B cell (primary cell): ENCODE measurements at regions of chr7 and their contacts with region 1.

Region 1: DNA sequence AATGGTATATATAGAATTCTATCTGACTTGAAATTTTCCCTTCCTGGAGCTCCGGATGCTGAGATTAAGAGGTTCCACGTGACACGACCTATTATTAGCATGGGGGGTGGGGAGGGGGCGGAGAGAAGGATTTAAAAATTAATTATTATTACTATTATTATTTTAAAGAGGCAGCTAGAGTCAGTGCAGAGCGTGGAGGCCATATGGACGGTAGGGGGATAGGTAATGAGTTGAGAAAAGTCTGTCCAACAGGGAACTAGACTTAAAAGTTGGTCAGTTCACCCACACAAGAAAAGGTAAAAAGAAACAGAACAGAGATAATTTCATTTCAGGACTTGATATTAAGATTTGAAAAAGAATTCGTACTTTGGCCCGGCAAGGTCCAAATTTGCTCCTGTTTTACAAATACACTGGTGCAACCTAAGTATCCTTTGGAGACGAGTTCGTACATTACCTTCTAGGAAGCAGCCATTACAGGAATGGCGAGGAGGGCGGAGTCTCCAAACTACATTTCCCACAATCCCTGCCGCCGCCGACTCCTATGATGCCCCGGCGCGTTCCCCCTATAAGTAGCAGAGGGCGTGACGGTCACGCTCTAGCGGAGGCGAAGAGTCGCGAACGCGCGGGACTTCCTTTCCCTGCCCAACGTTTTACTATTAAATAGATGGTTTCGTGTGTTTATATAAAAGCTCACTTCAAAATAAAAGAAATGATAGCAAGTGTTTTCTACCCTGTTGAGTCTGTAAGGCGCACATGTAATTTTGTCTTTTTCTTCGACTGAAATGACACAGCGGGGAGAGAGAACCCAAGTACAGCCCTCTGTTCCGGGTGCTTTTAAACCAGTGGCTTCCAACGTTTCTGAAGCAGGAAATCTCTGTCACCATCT is at the start of gene SMIM30:
- DNase-seq: peak; percentile 91
- ATAC-seq: peak; percentile 100
- H3K4me3 ChIP-seq: peak within 1 kb of the TSS; percentile 40 to 88 (median 69)
- H3K4me3 Mint-ChIP-seq: peak within 1 kb of the TSS; percentile 96
- H3K27ac ChIP-seq: peak within 1 kb of the TSS; percentile 62 to 87
- H3K27ac Mint-ChIP-seq: peak within 1 kb of the TSS; percentile 95
- H3K4me1 ChIP-seq: peaks cover 8 to 11% of the 10 kb centered on the region in 2 donors
- H3K4me1 Mint-ChIP-seq: peaks cover 23% of the 10 kb centered on the region
- H3K27me3 ChIP-seq: no peaks in the 10 kb centered on the region
- H3K27me3 Mint-ChIP-seq: no peaks in the 10 kb centered on the region
- CTCF ChIP-seq: no peak
- total RNA-seq, gene SMIM30: 21.0 and 24.4 TPM in 2 replicates

Region 2: GRCh38 chr7:112398534-112398933 is 719.8 kb before region 1 on chr7:
- CTCF ChIA-PET with region 1: no interaction called
- POLR2A ChIA-PET with region 1: no interaction called
- intact Hi-C with region 1: loop called (anchors 2 kb)
- DNase-seq: no peak
- ATAC-seq: no peak
- H3K4me3 ChIP-seq: no peak overlapping the region
- H3K4me3 Mint-ChIP-seq: no peak overlapping the region
- H3K27ac ChIP-seq: no peak overlapping the region
- H3K27ac Mint-ChIP-seq: no peak overlapping the region
- H3K4me1 ChIP-seq: no peaks in the 10 kb centered on the region
- H3K4me1 Mint-ChIP-seq: peaks cover 1% of the 10 kb centered on the region
- H3K27me3 ChIP-seq: peaks cover 0 to 12% (median 7%) of the 10 kb centered on the region in 4 experiments
- H3K27me3 Mint-ChIP-seq: peaks cover 37% of the 10 kb centered on the region
- CTCF ChIP-seq: no peak

Region 3: GRCh38 chr7:112523871-112524270 is 594.4 kb before region 1 on chr7:
- CTCF ChIA-PET with region 1: no interaction called
- POLR2A ChIA-PET with region 1: no interaction called
- intact Hi-C with region 1: no loop called
- DNase-seq: no peak
- ATAC-seq: no peak
- H3K4me3 ChIP-seq: no peak overlapping the region
- H3K4me3 Mint-ChIP-seq: no peak overlapping the region
- H3K27ac ChIP-seq: no peak overlapping the region
- H3K27ac Mint-ChIP-seq: no peak overlapping the region
- H3K4me1 ChIP-seq: no peaks in the 10 kb centered on the region
- H3K4me1 Mint-ChIP-seq: no peaks in the 10 kb centered on the region
- H3K27me3 ChIP-seq: peaks cover 0 to 3% (median 0%) of the 10 kb centered on the region in 4 experiments
- H3K27me3 Mint-ChIP-seq: peaks cover 17% of the 10 kb centered on the region
- CTCF ChIP-seq: no peak

Region 4: DNA sequence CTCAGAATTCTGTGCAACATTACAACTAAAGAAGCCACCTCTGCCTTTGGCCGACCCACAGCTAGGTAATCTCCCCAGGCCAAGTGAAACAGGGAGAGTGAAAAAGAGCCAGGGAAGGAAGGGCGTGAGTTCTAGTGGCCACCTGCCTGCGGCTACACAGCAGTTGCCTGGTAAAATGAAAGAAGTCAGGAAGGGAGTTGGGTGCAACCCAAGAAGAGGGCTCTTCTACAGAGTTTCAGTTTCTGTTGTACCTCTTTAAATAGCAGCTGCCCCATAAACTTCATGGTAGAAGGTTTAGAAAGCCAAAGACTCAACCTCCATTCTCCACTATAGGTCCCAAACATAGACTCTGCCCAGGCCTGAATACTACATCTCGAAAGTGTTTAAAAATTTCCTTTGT is 251.9 kb before region 1 on chr7:
- CTCF ChIA-PET with region 1: no interaction called
- POLR2A ChIA-PET with region 1: no interaction called
- intact Hi-C with region 1: no loop called
- DNase-seq: no peak
- ATAC-seq: peak; percentile 36
- H3K4me3 ChIP-seq: no peak overlapping the region
- H3K4me3 Mint-ChIP-seq: peak overlapping the region; percentile 67
- H3K27ac ChIP-seq: peak overlapping the region in 1 of 2 donors; percentile 21
- H3K27ac Mint-ChIP-seq: peak overlapping the region; percentile 32
- H3K4me1 ChIP-seq: peaks cover 5 to 9% of the 10 kb centered on the region in 2 donors
- H3K4me1 Mint-ChIP-seq: peaks cover 33% of the 10 kb centered on the region
- H3K27me3 ChIP-seq: no peaks in the 10 kb centered on the region
- H3K27me3 Mint-ChIP-seq: no peaks in the 10 kb centered on the region
- CTCF ChIP-seq: no peak

Region 5: DNA sequence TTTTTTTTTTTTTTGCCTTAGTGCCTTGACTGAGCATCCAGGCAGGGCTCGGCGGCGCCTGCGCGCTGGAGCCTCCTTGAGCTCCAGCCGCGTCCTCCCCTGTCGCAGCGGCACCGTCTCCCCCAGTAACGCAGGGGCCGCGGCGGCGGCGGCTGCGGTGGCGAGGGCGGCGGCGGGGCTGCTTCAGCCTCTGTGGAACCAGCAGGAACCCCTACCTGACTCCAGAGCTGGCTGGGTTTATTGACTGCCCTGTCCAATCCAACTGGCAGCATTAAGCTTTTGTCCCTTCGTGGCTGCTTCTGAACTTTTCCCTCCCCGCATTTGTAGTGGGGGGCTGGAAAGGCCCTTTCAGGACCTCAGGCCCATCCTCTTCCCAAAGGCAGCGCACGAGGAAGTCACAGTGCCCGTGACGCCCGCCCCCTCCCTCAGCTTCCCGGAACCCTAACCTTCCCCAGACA is 31.9 kb before region 1 on chr7 and contains the start of gene GPR85:
- CTCF ChIA-PET with region 1: no interaction called
- POLR2A ChIA-PET with region 1: no interaction called
- intact Hi-C with region 1: no loop called
- DNase-seq: peak; percentile 12
- ATAC-seq: peak; percentile 33
- H3K4me3 ChIP-seq: peak within 1 kb of the TSS in 3 of 5 experiments; percentile 3 to 45 (median 35)
- H3K4me3 Mint-ChIP-seq: peak within 1 kb of the TSS; percentile 65
- H3K27ac ChIP-seq: no peak within 1 kb of the TSS
- H3K27ac Mint-ChIP-seq: no peak within 1 kb of the TSS
- H3K4me1 ChIP-seq: peaks cover 6 to 11% of the 10 kb centered on the region in 2 donors
- H3K4me1 Mint-ChIP-seq: peaks cover 14% of the 10 kb centered on the region
- H3K27me3 ChIP-seq: peaks cover 0 to 31% (median 25%) of the 10 kb centered on the region in 4 experiments
- H3K27me3 Mint-ChIP-seq: peaks cover 47% of the 10 kb centered on the region
- CTCF ChIP-seq: no peak
- total RNA-seq, gene GPR85: not detected in 2 replicates

Region 6: DNA sequence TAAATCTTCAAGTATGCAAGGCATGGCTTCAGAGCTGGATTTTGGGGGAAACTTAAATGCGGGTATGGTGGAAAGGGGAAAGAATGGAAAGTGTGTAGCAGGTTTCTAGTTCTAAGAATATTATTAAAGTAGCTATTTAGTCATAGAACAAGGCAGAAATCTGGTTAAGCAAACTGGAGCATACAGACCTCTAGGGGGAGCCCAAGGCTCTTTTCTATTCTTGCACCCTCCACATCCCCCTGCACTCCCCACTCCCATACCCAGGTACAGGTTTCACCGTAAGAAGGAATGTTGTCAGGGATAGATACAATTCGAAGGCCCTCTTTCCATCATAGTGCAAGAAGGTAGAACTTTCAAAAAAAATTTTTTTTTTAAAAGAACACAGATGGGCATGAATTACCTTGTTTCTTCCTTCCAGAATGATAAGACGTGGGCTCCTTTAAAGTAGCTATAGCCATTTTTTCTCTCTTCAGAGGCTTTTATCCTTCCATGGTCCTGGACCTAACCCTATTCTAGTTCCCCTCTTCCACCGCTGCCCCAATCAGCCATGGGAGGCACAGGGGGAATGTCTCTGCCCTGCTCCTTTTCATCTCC is 41.5 kb after region 1 on chr7:
- CTCF ChIA-PET with region 1: no interaction called
- POLR2A ChIA-PET with region 1: no interaction called
- intact Hi-C with region 1: no loop called
- DNase-seq: no peak
- ATAC-seq: no peak
- H3K4me3 ChIP-seq: no peak overlapping the region
- H3K4me3 Mint-ChIP-seq: no peak overlapping the region
- H3K27ac ChIP-seq: no peak overlapping the region
- H3K27ac Mint-ChIP-seq: no peak overlapping the region
- H3K4me1 ChIP-seq: no peaks in the 10 kb centered on the region
- H3K4me1 Mint-ChIP-seq: no peaks in the 10 kb centered on the region
- H3K27me3 ChIP-seq: peaks cover 0 to 13% (median 2%) of the 10 kb centered on the region in 4 experiments
- H3K27me3 Mint-ChIP-seq: peaks cover 22% of the 10 kb centered on the region
- CTCF ChIP-seq: peak; percentile 42